ENCODE measurements at regions of chr2 and their contacts with region 1.

Region 1: GRCh38 chr2:216620786-216621185 is 12.4 kb upstream of the IGFBP2 start:
- DNase-seq: no peak
- ATAC-seq: no peak
- H3K4me3 ChIP-seq: no peak overlapping the region
- H3K27ac ChIP-seq: no peak overlapping the region
- H3K4me1 ChIP-seq: no peaks in the 10 kb centered on the region
- H3K27me3 ChIP-seq: no peaks in the 10 kb centered on the region
- CTCF ChIP-seq: no peak

Region 2: DNA sequence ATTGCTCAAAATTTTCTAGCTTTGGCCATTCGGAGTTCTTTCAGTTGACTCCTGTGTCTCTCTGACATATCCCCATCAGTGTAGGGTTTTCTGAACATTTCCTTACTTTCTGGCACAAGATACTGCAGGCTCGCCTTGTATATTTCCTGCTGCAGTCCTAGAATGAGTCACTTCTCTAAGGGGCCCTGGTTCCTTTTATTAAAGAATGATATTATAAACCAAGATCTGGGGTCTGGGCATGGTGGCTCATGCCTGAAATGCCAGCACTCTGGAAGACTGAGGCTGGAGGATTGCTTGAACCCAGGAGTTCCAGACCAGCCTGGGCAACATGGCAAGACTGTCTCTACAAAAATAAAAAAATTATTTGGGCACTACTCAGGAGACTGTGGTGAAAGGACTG is 125.1 kb before region 1 on chr2:
- CTCF ChIA-PET with region 1: no interaction called
- POLR2A ChIA-PET with region 1: interaction called, 13 read pairs
- in situ Hi-C with region 1: no loop called
- intact Hi-C with region 1: no loop called
- DNase-seq: no peak
- ATAC-seq: no peak
- H3K4me3 ChIP-seq: no peak overlapping the region
- H3K27ac ChIP-seq: no peak overlapping the region
- H3K4me1 ChIP-seq: peaks cover 11% of the 10 kb centered on the region
- H3K27me3 ChIP-seq: no peaks in the 10 kb centered on the region
- CTCF ChIP-seq: no peak

Region 3: DNA sequence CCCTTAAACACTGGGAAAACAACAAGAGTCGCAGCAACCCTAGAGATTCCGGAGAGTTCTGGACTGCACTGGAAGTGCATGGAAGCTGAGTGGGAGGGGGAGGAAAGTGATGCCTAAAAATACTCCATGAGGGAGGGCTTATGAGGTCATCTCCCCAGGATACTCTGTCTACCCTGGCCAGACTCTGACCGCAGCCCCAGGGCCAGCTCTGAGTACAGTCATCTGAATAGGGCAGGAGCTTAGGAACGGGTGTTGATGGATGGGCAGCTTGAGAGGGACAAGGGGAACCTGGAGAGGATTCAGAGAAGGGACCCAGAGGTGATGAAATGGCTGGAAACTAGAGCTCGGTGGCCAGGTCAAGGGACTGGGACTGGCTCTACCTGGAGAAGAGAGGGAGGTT is 153.8 kb after region 1 on chr2:
- CTCF ChIA-PET with region 1: no interaction called
- POLR2A ChIA-PET with region 1: no interaction called
- in situ Hi-C with region 1: no loop called
- intact Hi-C with region 1: no loop called
- DNase-seq: no peak
- ATAC-seq: no peak
- H3K4me3 ChIP-seq: no peak overlapping the region
- H3K27ac ChIP-seq: no peak overlapping the region
- H3K4me1 ChIP-seq: no peaks in the 10 kb centered on the region
- H3K27me3 ChIP-seq: no peaks in the 10 kb centered on the region
- CTCF ChIP-seq: no peak